ENCODE measurements at regions of chr5 and their contacts with region 1.

Region 1: DNA sequence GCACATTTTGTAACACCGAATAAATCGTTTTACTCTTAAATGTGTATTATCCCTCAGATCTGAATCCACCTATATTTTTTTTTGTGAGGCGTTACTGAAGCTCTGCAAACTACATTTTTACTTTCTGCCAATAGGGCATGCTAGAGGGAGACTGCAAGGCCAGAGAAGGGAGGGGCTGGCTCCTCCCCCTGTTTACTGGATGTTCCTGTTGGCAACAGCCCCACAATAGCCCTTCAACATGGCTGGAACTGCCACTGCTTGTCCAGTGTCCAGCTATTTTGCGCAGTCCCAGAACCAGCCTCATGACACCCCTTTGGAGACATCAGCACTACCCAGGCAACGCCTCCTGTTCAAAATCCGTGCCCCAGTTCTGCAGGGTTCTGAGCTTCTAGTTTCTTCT is 85.4 kb upstream of the MIER3 start:
- DNase-seq: no peak
- ATAC-seq: no peak
- H3K4me3 Mint-ChIP-seq: no peak overlapping the region
- H3K27ac Mint-ChIP-seq: no peak overlapping the region
- H3K4me1 Mint-ChIP-seq: peaks cover 2% of the 10 kb centered on the region
- H3K27me3 Mint-ChIP-seq: no peaks in the 10 kb centered on the region
- CTCF ChIP-seq: no peak

Region 2: DNA sequence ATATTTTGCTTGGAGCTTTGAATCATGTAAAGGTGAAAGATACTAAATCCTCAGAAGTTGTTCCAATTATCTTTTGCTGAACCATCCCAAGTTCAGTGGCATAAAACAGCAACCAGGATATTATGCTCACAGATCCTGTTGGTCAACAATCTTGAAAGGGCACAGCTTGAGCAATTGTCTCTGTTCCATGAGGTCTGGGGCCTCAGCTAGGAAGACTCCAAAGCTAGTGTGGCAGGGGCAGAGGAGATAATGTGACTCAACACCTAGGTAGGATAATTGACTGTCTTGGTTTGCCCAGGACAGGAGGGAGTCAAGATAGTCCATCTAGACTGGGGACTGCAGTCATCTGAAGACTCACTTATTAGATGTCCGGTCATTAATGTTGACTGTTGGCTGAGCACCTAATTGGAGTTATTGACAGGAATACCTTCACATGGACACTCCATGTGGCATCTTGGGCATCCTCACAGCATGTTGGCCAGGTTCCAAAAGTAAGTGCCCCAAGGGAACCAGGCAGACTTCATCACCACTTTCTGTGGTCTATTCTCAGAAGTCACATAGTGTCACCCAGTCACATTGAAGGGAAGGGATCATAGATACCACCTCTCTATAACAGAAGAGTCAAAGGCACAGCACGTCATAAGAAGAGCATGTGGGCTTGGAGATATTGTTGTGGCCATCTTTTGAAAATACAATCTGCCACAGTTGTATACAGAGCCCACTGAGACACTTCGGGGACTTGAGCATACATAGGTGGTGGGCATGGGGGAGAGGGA is 48.1 kb after region 1 on chr5:
- CTCF ChIA-PET with region 1: no interaction called
- POLR2A ChIA-PET with region 1: no interaction called
- intact Hi-C with region 1: loop called (anchors 5 kb)
- DNase-seq: no peak
- ATAC-seq: no peak
- H3K4me3 Mint-ChIP-seq: no peak overlapping the region
- H3K27ac Mint-ChIP-seq: no peak overlapping the region
- H3K4me1 Mint-ChIP-seq: no peaks in the 10 kb centered on the region
- H3K27me3 Mint-ChIP-seq: peaks cover 10% of the 10 kb centered on the region
- CTCF ChIP-seq: no peak

Measured in activated B cell treated with CpG ODN at 0.5 μM for 24 hours (primary cell).